Natural killer cell (primary cell): ENCODE measurements at regions of chr13 and their contacts with region 1.

Region 1: GRCh38 chr13:112443995-112444860 is 68.1 kb downstream of the SPACA7 start:
- DNase-seq: peak; percentile 33 to 38
- ATAC-seq: peak in 2 of 3 donors; percentile 40 to 78
- H3K4me3 ChIP-seq: no peak overlapping the region
- H3K4me3 Mint-ChIP-seq: no peak overlapping the region
- H3K27ac ChIP-seq: no peak overlapping the region
- H3K27ac Mint-ChIP-seq: no peak overlapping the region
- H3K4me1 ChIP-seq: no peaks in the 10 kb centered on the region
- H3K4me1 Mint-ChIP-seq: no peaks in the 10 kb centered on the region
- H3K27me3 ChIP-seq: no peaks in the 10 kb centered on the region
- H3K27me3 Mint-ChIP-seq: peaks cover 20 to 21% of the 10 kb centered on the region in 2 donors
- CTCF ChIP-seq: peak; percentile 53

Region 2: DNA sequence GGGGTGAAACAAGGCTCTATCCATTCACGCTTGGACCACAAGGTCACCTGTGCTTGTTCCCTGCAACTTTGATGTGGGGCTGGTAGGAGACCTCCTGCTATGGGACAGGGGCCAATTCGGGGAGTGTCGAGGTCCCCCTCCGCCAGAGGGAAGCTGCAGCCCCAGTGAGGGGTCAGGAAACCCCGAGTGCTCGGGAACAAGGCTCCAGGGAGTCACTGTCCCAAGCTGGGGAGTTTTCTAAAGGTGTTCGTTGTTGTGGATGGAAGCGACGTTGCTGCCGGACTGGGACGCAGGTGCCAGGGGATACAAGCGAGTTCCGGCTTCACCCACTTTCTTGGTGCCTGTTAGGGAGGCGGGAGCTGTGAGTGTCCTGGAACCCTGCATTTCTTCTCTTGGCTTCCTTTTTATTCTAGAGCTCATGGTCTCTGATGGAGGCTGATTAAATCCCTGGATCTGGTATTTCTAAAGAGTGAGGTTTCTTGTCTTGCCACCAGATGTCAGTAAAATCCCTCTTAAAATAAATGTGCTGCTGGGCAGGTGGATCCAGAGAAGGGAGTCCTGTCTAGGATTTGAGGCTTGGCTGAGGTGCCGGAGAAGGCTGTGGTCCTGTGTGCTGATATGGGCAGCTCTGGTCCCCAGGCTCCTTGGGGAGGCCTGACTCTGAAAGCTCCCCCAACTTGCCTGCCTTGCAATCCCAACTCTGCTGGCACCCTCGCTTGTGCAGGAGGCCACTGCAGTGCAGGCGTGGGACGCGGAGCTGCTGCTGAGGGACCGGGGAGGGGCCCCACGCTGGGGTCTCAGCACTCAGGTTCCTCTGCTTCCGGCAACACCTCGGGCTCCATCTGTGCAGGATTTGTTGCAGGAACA is 969.9 kb before region 1 on chr13:
- intact Hi-C with region 1: loop called (anchors 10 kb)
- DNase-seq: peak in 1 of 2 donors; percentile 30
- ATAC-seq: no peak
- H3K4me3 ChIP-seq: no peak overlapping the region
- H3K4me3 Mint-ChIP-seq: no peak overlapping the region
- H3K27ac ChIP-seq: no peak overlapping the region
- H3K27ac Mint-ChIP-seq: no peak overlapping the region
- H3K4me1 ChIP-seq: no peaks in the 10 kb centered on the region
- H3K4me1 Mint-ChIP-seq: no peaks in the 10 kb centered on the region
- H3K27me3 ChIP-seq: no peaks in the 10 kb centered on the region
- H3K27me3 Mint-ChIP-seq: no peaks in the 10 kb centered on the region
- CTCF ChIP-seq: no peak

Region 3: DNA sequence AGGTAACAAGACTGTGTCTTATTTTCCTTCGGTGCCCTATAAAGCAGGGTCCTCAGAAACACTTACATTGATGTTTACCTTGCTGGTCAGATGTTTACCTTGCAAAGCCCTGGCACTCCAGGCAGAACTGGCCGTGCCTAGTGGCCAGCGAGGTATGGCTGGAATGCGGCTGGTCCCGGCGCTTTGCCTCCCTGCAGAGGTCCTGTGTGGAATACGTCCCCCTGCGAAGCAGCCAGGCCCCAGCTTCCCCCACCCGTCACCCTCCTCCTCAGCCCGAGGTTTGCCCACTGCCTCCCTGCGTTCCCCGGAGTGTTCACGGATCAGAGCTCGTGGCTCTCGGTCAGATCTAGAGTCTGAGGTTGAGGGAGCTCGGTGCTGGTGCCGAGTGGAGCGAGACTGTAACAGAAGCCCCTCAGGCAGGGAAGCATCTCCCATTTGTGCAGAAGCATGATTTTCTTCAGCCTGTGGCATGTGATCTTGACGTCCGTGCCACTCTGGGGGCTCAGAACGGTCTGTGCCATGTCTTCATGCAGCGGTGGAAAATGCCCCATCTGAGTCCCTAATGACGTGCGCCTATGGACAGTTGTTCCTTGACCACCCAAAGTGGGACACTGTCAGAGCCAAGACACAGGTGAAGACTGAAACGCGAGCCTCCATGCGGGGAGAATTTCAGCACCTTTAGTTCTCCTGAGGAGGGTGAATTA is 432.1 kb before region 1 on chr13:
- intact Hi-C with region 1: no loop called
- DNase-seq: no peak
- ATAC-seq: no peak
- H3K4me3 ChIP-seq: no peak overlapping the region
- H3K4me3 Mint-ChIP-seq: no peak overlapping the region
- H3K27ac ChIP-seq: no peak overlapping the region
- H3K27ac Mint-ChIP-seq: no peak overlapping the region
- H3K4me1 ChIP-seq: no peaks in the 10 kb centered on the region
- H3K4me1 Mint-ChIP-seq: no peaks in the 10 kb centered on the region
- H3K27me3 ChIP-seq: no peaks in the 10 kb centered on the region
- H3K27me3 Mint-ChIP-seq: peaks cover 0 to 2% of the 10 kb centered on the region in 2 donors
- CTCF ChIP-seq: no peak